Esophagus muscularis mucosa (tissue), 4 donors: ENCODE measurements at regions of chr1 and their contacts with region 1.

Region 1: DNA sequence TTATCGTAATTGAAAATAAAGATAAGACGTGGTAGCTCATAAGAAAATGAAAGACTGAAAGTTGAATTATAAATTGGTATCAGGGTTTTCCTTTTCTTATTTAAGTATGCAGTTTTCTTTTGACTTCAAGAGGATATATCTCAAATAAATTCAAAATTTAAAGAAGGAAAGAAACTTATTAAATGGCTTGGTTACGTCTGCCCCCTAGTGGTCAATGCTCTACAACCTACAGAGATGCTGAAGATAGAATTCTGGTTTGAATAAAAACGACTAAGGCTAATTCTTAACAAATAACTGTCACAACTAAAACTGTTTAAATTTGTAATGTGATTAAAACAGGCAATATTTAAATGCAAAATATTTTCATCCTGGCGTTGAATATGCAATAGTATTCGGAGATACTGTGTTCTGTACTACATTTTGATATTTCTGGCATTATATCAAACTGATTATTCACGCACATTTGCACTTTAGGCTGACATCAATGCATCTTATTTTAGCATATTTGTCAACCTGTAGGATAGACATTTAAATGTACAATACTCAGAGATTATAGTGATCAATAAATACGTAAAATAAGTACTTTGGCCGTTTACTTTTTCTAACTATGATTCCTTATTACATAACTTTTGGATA is 26.8 kb downstream of the IFI44 start:
- DNase-seq: no peak
- H3K4me3 ChIP-seq: no peak overlapping the region
- H3K27ac ChIP-seq: no peak overlapping the region
- H3K4me1 ChIP-seq: no peaks in the 10 kb centered on the region
- H3K27me3 ChIP-seq: no peaks in the 10 kb centered on the region
- CTCF ChIP-seq: peak; percentile 76 to 90 (median 86)
- EP300 ChIP-seq: no peak
- POLR2A ChIP-seq: no peak

Region 2: GRCh38 chr1:78145105-78145580 is 531.3 kb before region 1 on chr1:
- intact Hi-C with region 1: loop called (anchors 5 kb)
- DNase-seq: no peak
- H3K4me3 ChIP-seq: no peak overlapping the region
- H3K27ac ChIP-seq: no peak overlapping the region
- H3K4me1 ChIP-seq: peaks cover 0 to 7% (median 0%) of the 10 kb centered on the region in 4 donors
- H3K27me3 ChIP-seq: no peaks in the 10 kb centered on the region
- CTCF ChIP-seq: peak; percentile 79 to 83 (median 82)
- EP300 ChIP-seq: no peak
- POLR2A ChIP-seq: no peak

Region 3: DNA sequence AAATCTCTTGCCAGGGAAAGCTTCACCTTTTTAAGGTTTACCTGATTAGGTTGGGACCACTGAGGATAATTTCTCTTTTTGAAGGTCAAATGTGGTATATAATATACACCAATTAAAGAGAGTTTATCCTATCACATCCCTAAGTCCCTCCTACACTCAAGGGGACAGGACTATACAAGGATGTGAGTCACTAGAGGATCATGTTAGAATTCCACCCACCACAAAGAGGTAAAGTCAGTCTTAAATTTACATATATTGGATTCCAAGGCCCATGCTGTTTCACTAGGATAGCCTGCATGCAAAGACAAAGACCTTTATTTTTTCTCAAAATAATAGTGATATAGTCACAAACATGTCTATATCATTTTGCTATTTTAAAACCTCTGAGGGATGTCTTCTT is 466.3 kb before region 1 on chr1:
- intact Hi-C with region 1: no loop called
- DNase-seq: no peak
- H3K4me3 ChIP-seq: no peak overlapping the region
- H3K27ac ChIP-seq: no peak overlapping the region
- H3K4me1 ChIP-seq: no peaks in the 10 kb centered on the region
- H3K27me3 ChIP-seq: no peaks in the 10 kb centered on the region
- CTCF ChIP-seq: no peak
- EP300 ChIP-seq: no peak
- POLR2A ChIP-seq: no peak

Region 4: DNA sequence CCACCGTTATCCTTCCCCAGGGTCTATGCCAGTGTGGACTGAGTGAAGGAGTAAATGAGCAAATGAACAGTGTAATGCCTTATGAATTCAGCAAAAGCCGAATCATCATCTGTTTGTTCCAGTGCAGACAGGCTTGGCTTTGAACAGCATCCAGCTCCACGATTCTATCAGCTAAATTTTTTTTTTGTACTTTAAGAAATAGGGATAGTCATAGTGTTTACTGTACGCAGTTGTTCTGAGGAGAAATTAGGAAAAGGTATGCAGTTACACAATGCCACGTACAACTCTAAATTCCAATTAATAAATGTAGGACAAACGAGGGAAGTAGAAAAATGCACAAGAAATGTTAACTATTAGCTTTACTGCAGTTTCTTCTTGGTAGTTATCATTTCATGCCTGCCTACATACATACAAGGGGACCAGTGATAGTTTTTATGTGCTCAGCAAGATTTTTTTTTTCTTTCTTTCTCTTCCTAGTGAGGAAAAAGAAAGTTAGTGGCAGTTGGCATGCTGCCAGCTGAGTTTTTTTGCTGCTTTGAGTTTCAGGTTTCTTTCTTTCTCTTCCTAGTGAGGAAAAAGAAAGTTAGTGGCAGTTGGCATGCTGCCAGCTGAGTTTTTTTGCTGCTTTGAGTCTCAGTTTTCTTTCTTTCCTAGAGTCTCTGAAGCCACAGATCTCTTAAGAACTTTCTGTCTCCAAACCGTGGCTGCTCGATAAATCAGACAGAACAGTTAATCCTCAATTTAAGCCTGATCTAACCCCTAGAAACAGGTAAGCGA is 56.5 kb before region 1 on chr1 and contains the start of gene IFI44L:
- intact Hi-C with region 1: loop called (anchors 2 kb)
- DNase-seq: no peak
- H3K4me3 ChIP-seq: peak within 1 kb of the TSS; percentile 40 to 53 (median 44)
- H3K27ac ChIP-seq: peak within 1 kb of the TSS; percentile 59 to 77 (median 74)
- H3K4me1 ChIP-seq: peaks cover 5 to 36% (median 27%) of the 10 kb centered on the region in 4 donors
- H3K27me3 ChIP-seq: no peaks in the 10 kb centered on the region
- CTCF ChIP-seq: no peak
- EP300 ChIP-seq: no peak
- POLR2A ChIP-seq: no peak
- total RNA-seq, gene IFI44L: 4.3 to 15.4 (median 9.6) TPM

Region 5: DNA sequence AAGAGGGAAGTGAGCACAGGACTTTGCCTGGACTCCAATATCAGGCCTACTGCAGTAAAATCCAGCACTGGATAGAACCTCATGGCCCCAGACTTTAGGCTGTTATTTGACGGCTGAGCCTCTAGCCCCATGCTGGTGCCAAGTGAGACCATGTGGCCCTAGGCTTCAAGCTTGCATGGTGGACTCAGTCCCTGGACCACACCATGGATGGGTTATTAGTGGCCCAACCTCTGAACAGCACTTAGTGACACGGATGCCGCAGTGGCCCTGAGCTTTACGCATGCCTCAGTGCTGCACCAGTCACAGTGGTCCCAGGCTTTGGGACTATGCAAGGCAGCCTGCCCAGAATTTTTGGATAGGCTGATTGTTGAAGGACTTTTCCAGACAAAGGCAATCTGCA is 43.3 kb before region 1 on chr1:
- intact Hi-C with region 1: no loop called
- DNase-seq: no peak
- H3K4me3 ChIP-seq: no peak overlapping the region
- H3K27ac ChIP-seq: no peak overlapping the region
- H3K4me1 ChIP-seq: no peaks in the 10 kb centered on the region
- H3K27me3 ChIP-seq: no peaks in the 10 kb centered on the region
- CTCF ChIP-seq: no peak
- EP300 ChIP-seq: no peak
- POLR2A ChIP-seq: no peak

Region 6: GRCh38 chr1:79177844-79178243 is 501.4 kb after region 1 on chr1:
- intact Hi-C with region 1: no loop called
- DNase-seq: no peak
- H3K4me3 ChIP-seq: no peak overlapping the region
- H3K27ac ChIP-seq: no peak overlapping the region
- H3K4me1 ChIP-seq: no peaks in the 10 kb centered on the region
- H3K27me3 ChIP-seq: no peaks in the 10 kb centered on the region
- CTCF ChIP-seq: no peak
- EP300 ChIP-seq: no peak
- POLR2A ChIP-seq: no peak